PC-3 (cell line): ENCODE measurements at regions of chr14 and their contacts with region 1.

Region 1: GRCh38 chr14:24114536-24115450 is at the starts of genes DCAF11 and NRL:
- DNase-seq: peak; percentile 99
- ATAC-seq: peak; percentile 86
- H3K4me3 ChIP-seq: peak within 1 kb of the TSS; percentile 96
- H3K27ac ChIP-seq: peak within 1 kb of the TSS; percentile 90
- H3K4me1 ChIP-seq: peaks cover 18% of the 10 kb centered on the region
- H3K27me3 ChIP-seq: no peaks in the 10 kb centered on the region
- CTCF ChIP-seq: no peak
- total RNA-seq, gene DCAF11: 68.2 and 85.8 TPM in 2 replicates
- total RNA-seq, gene NRL: 1.5 and 1.7 TPM in 2 replicates

Region 2: GRCh38 chr14:23286020-23286905 is 828.5 kb before region 1 on chr14 and contains the start of gene HOMEZ:
- CTCF ChIA-PET with region 1: no interaction called
- POLR2A ChIA-PET with region 1: interaction called, 26 read pairs
- intact Hi-C with region 1: no loop called
- DNase-seq: peak; percentile 98
- ATAC-seq: peak; percentile 98
- H3K4me3 ChIP-seq: peak within 1 kb of the TSS; percentile 100
- H3K27ac ChIP-seq: peak within 1 kb of the TSS; percentile 50
- H3K4me1 ChIP-seq: peaks cover 20% of the 10 kb centered on the region
- H3K27me3 ChIP-seq: no peaks in the 10 kb centered on the region
- CTCF ChIP-seq: no peak
- total RNA-seq, gene HOMEZ: 4.1 and 7.7 TPM in 2 replicates

Region 3: GRCh38 chr14:24135834-24136542 is 21.2 kb after region 1 on chr14 and contains the start of gene PSME1:
- CTCF ChIA-PET with region 1: interaction called, 4 read pairs
- POLR2A ChIA-PET with region 1: interaction called, 14 read pairs
- intact Hi-C with region 1: loop called (anchors 1 kb)
- DNase-seq: peak; percentile 90
- ATAC-seq: peak; percentile 86
- H3K4me3 ChIP-seq: peak within 1 kb of the TSS; percentile 95
- H3K27ac ChIP-seq: no peak within 1 kb of the TSS
- H3K4me1 ChIP-seq: peaks cover 23% of the 10 kb centered on the region
- H3K27me3 ChIP-seq: no peaks in the 10 kb centered on the region
- CTCF ChIP-seq: no peak
- total RNA-seq, gene PSME1: 140 and 163 TPM in 2 replicates

Region 4: DNA sequence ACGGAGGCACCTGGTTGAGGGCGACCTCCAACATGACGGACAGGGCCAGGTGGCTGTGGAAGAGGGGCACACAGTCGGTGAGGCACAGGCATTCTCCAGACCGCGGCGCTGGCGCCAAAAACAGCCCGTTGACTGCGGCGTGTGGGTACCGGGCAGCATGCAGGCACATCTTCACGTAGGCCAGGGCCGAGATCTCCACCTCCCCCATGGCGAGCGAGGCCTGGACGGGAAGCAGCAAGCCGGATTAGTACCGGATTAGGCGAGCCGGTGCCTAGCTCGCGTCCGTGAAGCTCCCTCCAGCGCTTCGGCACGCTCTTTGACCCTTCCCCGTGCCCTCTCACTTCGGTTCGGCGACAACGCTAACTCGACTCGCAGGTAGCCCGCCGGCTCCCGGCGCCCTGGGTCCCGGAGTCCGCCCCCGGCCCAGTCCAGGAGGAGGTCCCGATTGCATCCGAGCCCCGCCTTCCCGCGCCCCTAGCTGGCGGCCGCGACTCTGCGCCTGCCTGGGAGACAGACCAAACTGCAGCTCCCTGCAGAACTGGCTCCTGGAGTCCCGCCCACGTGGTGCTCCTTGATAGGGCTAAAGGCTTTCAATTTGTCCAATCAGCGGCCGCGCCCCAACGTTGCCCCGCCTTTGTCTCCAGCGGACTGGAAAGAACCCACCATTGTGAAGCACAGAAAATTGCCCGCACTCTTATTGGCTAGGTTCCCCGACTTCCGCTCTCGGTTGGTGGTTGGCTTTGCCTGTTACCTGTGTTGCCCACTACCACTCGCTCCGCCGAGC is 26.5 kb after region 1 on chr14 and contains the start of gene EMC9:
- CTCF ChIA-PET with region 1: interaction called, 4 read pairs
- POLR2A ChIA-PET with region 1: interaction called, 17 read pairs
- intact Hi-C with region 1: loop called (anchors 1 kb)
- DNase-seq: peak; percentile 99
- ATAC-seq: peak; percentile 85
- H3K4me3 ChIP-seq: peak within 1 kb of the TSS; percentile 91
- H3K27ac ChIP-seq: peak within 1 kb of the TSS; percentile 33
- H3K4me1 ChIP-seq: peaks cover 30% of the 10 kb centered on the region
- H3K27me3 ChIP-seq: no peaks in the 10 kb centered on the region
- CTCF ChIP-seq: no peak
- total RNA-seq, gene EMC9: 30.1 and 36.7 TPM in 2 replicates

Region 5: GRCh38 chr14:24146978-24147760 is 32.4 kb after region 1 on chr14 and contains the start of gene RNF31:
- CTCF ChIA-PET with region 1: no interaction called
- POLR2A ChIA-PET with region 1: interaction called, 17 read pairs
- intact Hi-C with region 1: loop called (anchors 1 kb)
- DNase-seq: peak; percentile 98
- ATAC-seq: peak; percentile 86
- H3K4me3 ChIP-seq: peak within 1 kb of the TSS; percentile 86
- H3K27ac ChIP-seq: peak within 1 kb of the TSS; percentile 48
- H3K4me1 ChIP-seq: peaks cover 18% of the 10 kb centered on the region
- H3K27me3 ChIP-seq: no peaks in the 10 kb centered on the region
- CTCF ChIP-seq: no peak
- total RNA-seq, gene RNF31: 69.6 and 79.4 TPM in 2 replicates

Region 6: GRCh38 chr14:24160850-24161804 is 46.3 kb after region 1 on chr14 and contains the start of gene IRF9:
- CTCF ChIA-PET with region 1: interaction called, 7 read pairs
- POLR2A ChIA-PET with region 1: no interaction called
- intact Hi-C with region 1: loop called (anchors 1 kb)
- DNase-seq: peak; percentile 97
- ATAC-seq: peak; percentile 94
- H3K4me3 ChIP-seq: peak within 1 kb of the TSS; percentile 47
- H3K27ac ChIP-seq: peak within 1 kb of the TSS; percentile 11
- H3K4me1 ChIP-seq: peaks cover 13% of the 10 kb centered on the region
- H3K27me3 ChIP-seq: no peaks in the 10 kb centered on the region
- CTCF ChIP-seq: peak; percentile 96
- total RNA-seq, gene IRF9: 10.5 and 20.6 TPM in 2 replicates